Sigmoid colon (tissue), 7 donors: ENCODE measurements at regions of chr5 and their contacts with region 1.

Region 1: GRCh38 chr5:88690409-88691229 is 192.4 kb downstream of the MEF2C start:
- DNase-seq: peak; percentile 82
- H3K4me3 ChIP-seq: peak overlapping the region in 3 of 4 donors; percentile 9 to 28 (median 27)
- H3K27ac ChIP-seq: no peak overlapping the region
- H3K4me1 ChIP-seq: peaks cover 0 to 45% (median 31%) of the 10 kb centered on the region in 4 donors
- H3K27me3 ChIP-seq: peaks cover 80 to 100% (median 94%) of the 10 kb centered on the region in 3 donors
- CTCF ChIP-seq: peak; percentile 63 to 98 (median 83)
- EP300 ChIP-seq: no peak
- POLR2A ChIP-seq: no peak

Region 2: DNA sequence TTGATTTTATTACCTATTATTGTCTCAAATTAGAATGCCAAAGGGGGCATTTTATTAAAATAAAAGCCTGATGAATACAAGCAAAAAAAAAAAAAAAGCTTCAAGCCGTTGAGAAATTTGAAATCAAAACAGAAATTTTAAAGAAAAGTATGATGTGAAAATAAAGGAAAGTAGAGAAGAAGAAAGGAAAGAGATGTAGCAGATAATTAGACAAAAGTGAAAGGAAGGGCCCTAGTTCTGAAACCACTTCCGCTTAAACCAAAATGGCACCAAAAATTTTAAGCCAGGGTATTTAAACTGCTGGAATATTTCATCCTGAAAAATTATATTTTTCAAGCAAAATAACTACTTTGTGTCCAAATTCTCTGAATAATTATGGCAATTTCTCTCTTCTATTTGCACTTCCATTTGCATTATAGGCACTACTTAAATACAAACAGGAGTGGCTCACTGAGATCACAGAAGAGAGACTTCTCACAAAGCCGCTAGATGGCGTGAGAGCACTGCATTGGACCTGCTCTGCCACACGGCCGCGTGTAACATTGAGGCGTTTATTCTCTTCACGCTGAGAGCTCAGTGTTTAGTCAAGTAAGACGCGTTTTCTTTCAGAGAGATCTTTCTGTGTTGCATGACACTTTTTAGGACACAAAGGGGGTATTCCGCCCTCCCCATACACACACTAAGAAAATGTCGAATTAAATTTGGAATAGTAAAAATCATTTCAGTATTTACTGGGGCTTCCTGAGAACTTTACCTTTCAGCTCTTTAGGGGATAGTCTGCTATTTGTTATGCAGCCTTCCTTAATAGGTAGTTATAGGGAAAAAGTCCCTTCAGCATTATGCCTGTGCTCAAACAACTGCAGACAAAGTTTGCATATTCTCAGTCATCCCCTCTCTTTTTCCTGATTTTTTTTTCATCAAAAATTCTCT is 909.5 kb before region 1 on chr5:
- intact Hi-C with region 1: loop called (anchors 1 kb)
- DNase-seq: peak; percentile 86
- H3K4me3 ChIP-seq: no peak overlapping the region
- H3K27ac ChIP-seq: no peak overlapping the region
- H3K4me1 ChIP-seq: no peaks in the 10 kb centered on the region
- H3K27me3 ChIP-seq: peaks cover 0 to 28% (median 5%) of the 10 kb centered on the region in 3 donors
- CTCF ChIP-seq: peak; percentile 55 to 91 (median 78)
- EP300 ChIP-seq: no peak
- POLR2A ChIP-seq: no peak